Sigmoid colon (tissue), 7 donors: ENCODE measurements at regions of chr2 and their contacts with region 1.

Region 1: DNA sequence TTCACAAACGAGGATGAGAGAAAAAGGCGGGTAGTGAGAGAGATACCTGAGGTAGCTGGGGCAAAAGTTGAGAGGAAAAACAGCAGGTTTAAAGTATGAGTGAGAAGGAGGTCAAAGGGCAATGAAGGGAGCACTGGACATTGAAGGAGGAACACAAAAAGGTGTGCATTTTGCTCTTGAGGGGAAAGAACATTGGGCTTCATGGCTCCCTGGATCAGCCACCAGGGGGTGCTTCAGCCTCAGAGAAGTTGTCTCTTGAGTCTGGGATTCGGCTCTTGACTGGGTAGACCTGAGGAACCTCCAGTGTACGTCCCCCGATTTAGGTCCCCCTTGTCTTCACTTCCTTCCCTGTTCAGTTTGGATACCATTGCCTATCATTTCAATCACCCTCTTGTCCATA is 128.5 kb downstream of the RAPGEF4 start:
- DNase-seq: peak; percentile 69
- H3K4me3 ChIP-seq: no peak overlapping the region
- H3K27ac ChIP-seq: no peak overlapping the region
- H3K4me1 ChIP-seq: peaks cover 0 to 10% (median 4%) of the 10 kb centered on the region in 4 donors
- H3K27me3 ChIP-seq: no peaks in the 10 kb centered on the region
- CTCF ChIP-seq: peak; percentile 54 to 72 (median 60)
- EP300 ChIP-seq: no peak
- POLR2A ChIP-seq: no peak

Region 2: DNA sequence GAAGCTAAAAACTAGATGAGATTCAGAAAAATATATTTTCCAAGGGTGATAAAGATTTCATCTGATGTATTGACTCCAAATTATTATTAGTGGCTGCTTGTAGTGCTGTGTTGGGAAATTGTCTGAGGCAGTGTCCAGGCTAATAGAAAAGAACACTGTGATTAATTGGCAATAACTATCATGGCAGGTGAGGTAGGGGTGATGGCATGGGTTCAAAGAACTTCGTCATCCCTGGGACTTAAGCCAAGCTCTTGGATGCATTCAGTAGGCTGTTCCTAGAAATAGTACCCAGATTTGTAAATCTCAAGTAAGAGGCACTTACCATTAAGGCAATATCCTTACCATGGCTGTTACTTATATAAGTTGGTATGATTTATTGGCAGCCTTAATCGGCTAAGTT is 141.7 kb before region 1 on chr2:
- intact Hi-C with region 1: no loop called
- DNase-seq: no peak
- H3K4me3 ChIP-seq: no peak overlapping the region
- H3K27ac ChIP-seq: no peak overlapping the region
- H3K4me1 ChIP-seq: no peaks in the 10 kb centered on the region
- H3K27me3 ChIP-seq: no peaks in the 10 kb centered on the region
- CTCF ChIP-seq: no peak
- EP300 ChIP-seq: no peak
- POLR2A ChIP-seq: no peak

Region 3: GRCh38 chr2:172878260-172878659 is 14.1 kb after region 1 on chr2:
- intact Hi-C with region 1: no loop called
- DNase-seq: no peak
- H3K4me3 ChIP-seq: no peak overlapping the region
- H3K27ac ChIP-seq: no peak overlapping the region
- H3K4me1 ChIP-seq: no peaks in the 10 kb centered on the region
- H3K27me3 ChIP-seq: no peaks in the 10 kb centered on the region
- CTCF ChIP-seq: no peak
- EP300 ChIP-seq: no peak
- POLR2A ChIP-seq: no peak

Region 4: DNA sequence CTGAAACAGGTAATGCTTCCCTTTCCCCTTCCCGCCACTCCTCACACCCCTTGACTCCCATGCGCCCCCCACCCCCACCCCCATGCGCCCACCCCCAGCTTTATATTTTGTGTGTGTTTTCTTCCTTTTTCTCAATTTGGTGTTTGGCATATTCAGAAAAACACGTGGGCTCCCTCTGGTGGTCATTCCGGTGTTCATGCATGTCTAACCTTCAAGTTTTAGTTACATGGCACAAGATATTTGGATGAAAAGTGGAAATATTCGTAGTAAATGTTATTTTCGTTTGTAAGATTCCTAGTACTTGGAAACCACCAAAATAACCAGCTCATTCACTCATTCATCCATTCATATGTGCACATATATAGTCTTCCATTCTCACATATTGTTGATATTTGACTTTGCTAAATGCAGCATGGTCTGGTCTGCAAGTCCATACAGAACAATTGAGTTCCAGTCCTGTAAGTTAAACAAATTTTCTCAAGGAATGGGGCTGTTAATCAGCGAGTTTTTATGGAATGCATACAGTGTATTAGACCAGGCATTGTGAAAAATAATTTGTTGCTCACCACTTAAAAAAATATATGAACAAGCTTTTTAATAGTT is 67.8 kb after region 1 on chr2:
- intact Hi-C with region 1: loop called (anchors 1 kb)
- DNase-seq: peak; percentile 73
- H3K4me3 ChIP-seq: peak overlapping the region in 3 of 4 donors; percentile 24 to 32 (median 28)
- H3K27ac ChIP-seq: peak overlapping the region; percentile 48 to 72 (median 54)
- H3K4me1 ChIP-seq: peaks cover 0 to 45% (median 27%) of the 10 kb centered on the region in 4 donors
- H3K27me3 ChIP-seq: no peaks in the 10 kb centered on the region
- CTCF ChIP-seq: peak; percentile 19 to 72 (median 54)
- EP300 ChIP-seq: no peak
- POLR2A ChIP-seq: no peak